ENCODE measurements at regions of chr3 and their contacts with region 1.

Region 1: GRCh38 chr3:170414202-170414663 is 4.4 kb upstream of the CLDN11 start:
- DNase-seq: peak; percentile 59
- H3K4me3 Mint-ChIP-seq: no peak overlapping the region
- H3K27ac Mint-ChIP-seq: no peak overlapping the region
- H3K4me1 Mint-ChIP-seq: peaks cover 6% of the 10 kb centered on the region
- H3K27me3 Mint-ChIP-seq: peaks cover 16% of the 10 kb centered on the region

Region 2: DNA sequence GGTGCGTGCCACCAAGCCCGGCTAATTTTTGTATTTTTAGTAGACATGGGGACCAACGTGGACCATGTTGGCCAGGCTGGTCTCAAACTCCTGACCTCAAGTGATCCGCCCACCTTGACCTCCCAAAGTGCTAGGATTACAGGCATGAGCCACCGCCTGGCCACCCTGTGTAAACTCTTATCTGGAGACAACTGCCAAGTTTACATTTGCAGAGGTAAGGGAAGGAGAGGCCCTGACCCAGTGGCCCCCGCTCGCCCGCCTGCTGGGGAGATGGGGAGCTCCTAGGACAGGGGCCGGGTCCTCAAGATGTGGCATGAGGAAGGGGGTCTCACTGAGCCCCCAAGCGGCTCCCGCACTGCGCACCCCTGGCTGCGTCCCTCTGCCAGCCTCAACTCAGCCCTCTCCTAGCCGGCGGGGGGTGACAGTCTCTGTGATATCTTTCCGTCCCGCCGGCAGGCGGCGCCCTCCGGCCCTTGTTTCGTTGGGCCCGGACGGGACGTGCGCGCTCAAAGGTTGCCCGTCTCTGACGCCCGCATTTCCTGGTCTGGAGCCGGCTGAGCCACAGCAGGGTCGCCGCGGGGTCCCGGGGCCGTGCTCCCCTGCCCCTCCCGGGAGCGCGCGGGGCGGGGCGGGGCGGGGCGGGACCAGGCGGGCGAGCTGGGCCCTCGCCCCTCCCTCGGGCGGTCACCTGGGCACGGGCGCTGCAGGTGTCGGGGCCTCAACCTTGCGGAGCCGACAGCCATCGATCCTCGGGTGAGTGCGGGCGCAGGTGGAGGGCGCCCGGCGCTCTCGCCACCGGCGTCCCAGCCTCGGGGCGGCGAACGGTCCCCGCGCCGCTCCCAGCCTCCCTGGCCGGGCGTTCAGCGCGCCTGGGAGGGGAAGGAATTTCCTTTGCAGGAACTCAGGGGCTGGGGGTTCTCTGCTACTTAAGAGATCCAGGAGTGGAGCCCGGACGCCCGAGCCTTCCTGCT is 376.5 kb before region 1 on chr3 and contains the start of gene GPR160:
- CTCF ChIA-PET with region 1: no interaction called
- intact Hi-C with region 1: loop called (anchors 5 kb)
- DNase-seq: peak; percentile 89
- H3K4me3 Mint-ChIP-seq: peak within 1 kb of the TSS; percentile 84
- H3K27ac Mint-ChIP-seq: no peak within 1 kb of the TSS
- H3K4me1 Mint-ChIP-seq: peaks cover 24% of the 10 kb centered on the region
- H3K27me3 Mint-ChIP-seq: no peaks in the 10 kb centered on the region
- total RNA-seq, gene GPR160: 10.3 TPM

Region 3: DNA sequence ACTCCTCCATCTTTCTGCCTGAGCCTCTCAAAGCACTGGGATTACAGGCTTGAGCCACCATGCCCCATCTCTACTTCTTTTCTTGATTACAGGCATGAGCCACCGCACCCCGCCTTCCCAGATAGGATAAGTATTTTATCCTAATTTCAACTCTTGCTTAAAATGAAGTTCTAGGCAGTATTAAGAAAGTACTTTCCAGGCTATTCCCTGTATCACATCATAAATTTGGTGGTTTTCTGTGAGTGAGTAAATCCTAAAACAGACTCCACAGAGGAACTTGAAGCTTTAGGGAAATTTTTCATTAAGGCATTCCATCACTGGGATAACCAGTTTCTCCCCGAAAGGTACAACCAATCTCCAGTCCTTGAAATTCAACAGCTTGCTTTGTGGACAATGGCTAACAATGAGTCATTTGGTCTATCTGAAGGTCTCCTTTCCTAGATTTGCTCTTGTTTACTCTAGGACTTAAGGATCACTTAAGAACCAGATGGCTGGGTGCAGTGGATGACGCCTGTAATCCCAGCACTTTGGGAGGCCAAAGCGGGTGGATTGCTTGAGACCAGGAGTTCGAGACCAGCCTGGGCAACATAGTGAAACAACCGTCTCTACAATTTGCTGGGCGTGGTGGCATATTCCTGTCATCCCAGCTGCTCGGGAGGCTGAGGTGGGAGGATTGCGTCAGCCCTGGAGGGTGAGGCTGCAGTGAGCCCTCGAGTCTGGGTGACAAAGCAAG is 106.4 kb before region 1 on chr3:
- CTCF ChIA-PET with region 1: interaction called, 4 read pairs
- intact Hi-C with region 1: loop called (anchors 1 kb)
- DNase-seq: no peak
- H3K4me3 Mint-ChIP-seq: no peak overlapping the region
- H3K27ac Mint-ChIP-seq: no peak overlapping the region
- H3K4me1 Mint-ChIP-seq: no peaks in the 10 kb centered on the region
- H3K27me3 Mint-ChIP-seq: no peaks in the 10 kb centered on the region

Region 4: GRCh38 chr3:170499565-170500156 is 85.4 kb after region 1 on chr3:
- CTCF ChIA-PET with region 1: interaction called, 8 read pairs
- intact Hi-C with region 1: loop called (anchors 1 kb)
- DNase-seq: peak; percentile 39
- H3K4me3 Mint-ChIP-seq: no peak overlapping the region
- H3K27ac Mint-ChIP-seq: no peak overlapping the region
- H3K4me1 Mint-ChIP-seq: no peaks in the 10 kb centered on the region
- H3K27me3 Mint-ChIP-seq: peaks cover 3% of the 10 kb centered on the region

Region 5: DNA sequence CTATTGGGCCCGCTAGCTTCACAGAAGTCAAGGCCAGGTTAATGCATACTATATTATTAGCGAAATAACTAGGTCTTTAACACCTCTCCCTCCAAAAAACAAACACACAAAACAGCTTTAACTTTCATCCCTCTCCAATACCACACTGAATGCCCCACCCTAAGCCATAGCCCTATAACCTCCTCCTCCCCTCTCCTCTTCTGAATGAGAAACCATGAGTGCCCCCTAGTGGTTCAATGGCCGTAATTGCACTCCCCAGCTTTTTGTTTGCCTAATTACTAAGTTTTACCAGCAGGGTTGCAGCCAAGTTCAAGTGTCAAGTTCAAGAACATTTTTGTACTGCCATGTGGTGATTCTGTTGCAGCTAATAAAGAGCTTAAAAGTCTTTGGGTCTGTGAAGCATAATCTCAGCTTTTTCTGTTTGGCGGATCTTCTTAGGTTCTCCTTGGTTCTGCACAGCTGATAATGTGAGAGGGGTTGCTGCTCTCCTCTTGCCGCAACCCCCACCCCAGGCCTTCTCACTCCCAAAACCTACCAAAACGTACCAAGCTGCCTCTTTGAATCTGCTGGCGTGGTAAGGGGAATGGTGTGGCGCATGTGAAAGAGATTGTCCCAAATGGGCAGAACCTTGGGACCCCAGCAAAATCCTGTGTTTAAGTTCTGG is 397.8 kb after region 1 on chr3:
- CTCF ChIA-PET with region 1: interaction called, 141 read pairs
- intact Hi-C with region 1: loop called (anchors 1 kb)
- DNase-seq: peak; percentile 81
- H3K4me3 Mint-ChIP-seq: no peak overlapping the region
- H3K27ac Mint-ChIP-seq: no peak overlapping the region
- H3K4me1 Mint-ChIP-seq: no peaks in the 10 kb centered on the region
- H3K27me3 Mint-ChIP-seq: no peaks in the 10 kb centered on the region